ENCODE measurements at regions of chr10 and their contacts with region 1.

Region 1: GRCh38 chr10:77641788-77642397 is 4.3 kb upstream of the KCNMA1 start:
- DNase-seq: peak; percentile 87

Region 2: GRCh38 chr10:77173615-77174461 is 468.1 kb before region 1 on chr10:
- in situ Hi-C with region 1: loop called (anchors 10 kb)
- DNase-seq: peak; percentile 83

Region 3: DNA sequence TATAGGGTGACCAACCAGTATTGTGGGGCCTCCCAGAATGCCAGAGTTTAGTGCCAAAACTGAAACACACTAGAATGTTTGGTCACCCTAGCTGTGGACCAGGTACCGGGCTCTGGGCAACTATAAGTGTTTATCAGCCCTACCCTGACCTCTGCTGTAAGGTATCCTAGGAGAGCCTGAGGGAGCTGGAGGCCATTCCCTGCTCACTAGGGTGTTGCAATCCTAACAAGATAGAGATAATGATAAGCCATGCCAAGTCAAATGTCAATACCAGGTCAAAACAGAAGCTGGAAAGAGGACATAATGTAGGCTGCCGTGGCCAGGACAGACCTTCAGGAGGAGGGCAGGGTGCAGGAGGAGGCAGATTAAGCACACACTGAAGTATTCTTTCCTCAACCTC is 156.0 kb before region 1 on chr10:
- in situ Hi-C with region 1: loop called (anchors 10 kb)
- DNase-seq: no peak